Esophagus muscularis mucosa (tissue), 4 donors: ENCODE measurements at regions of chr16 and their contacts with region 1.

Region 1: GRCh38 chr16:96935-97381 is 18.9 kb downstream of the MPG start:
- DNase-seq: peak; percentile 98
- H3K4me3 ChIP-seq: no peak overlapping the region
- H3K27ac ChIP-seq: no peak overlapping the region
- H3K4me1 ChIP-seq: peaks cover 19 to 37% (median 25%) of the 10 kb centered on the region in 4 donors
- H3K27me3 ChIP-seq: no peaks in the 10 kb centered on the region
- CTCF ChIP-seq: peak; percentile 98 to 100 (median 99)
- EP300 ChIP-seq: no peak
- POLR2A ChIP-seq: no peak

Region 2: GRCh38 chr16:65671-66137 is 31.3 kb before region 1 on chr16:
- intact Hi-C with region 1: loop called (anchors 1 kb)
- DNase-seq: peak; percentile 96
- H3K4me3 ChIP-seq: no peak overlapping the region
- H3K27ac ChIP-seq: no peak overlapping the region
- H3K4me1 ChIP-seq: peaks cover 51 to 60% (median 55%) of the 10 kb centered on the region in 4 donors
- H3K27me3 ChIP-seq: no peaks in the 10 kb centered on the region
- CTCF ChIP-seq: peak in 2 of 3 experiments; percentile 93 to 94
- EP300 ChIP-seq: no peak
- POLR2A ChIP-seq: no peak

Region 3: GRCh38 chr16:164827-165538 is 68.0 kb after region 1 on chr16:
- intact Hi-C with region 1: no loop called
- DNase-seq: no peak
- H3K4me3 ChIP-seq: peak overlapping the region in 3 of 4 donors; percentile 17 to 30 (median 25)
- H3K27ac ChIP-seq: no peak overlapping the region
- H3K4me1 ChIP-seq: peaks cover 19 to 21% (median 20%) of the 10 kb centered on the region in 4 donors
- H3K27me3 ChIP-seq: peaks cover 10 to 87% (median 43%) of the 10 kb centered on the region in 4 donors
- CTCF ChIP-seq: no peak
- EP300 ChIP-seq: no peak
- POLR2A ChIP-seq: no peak

Region 4: GRCh38 chr16:200388-200787 is 103.4 kb after region 1 on chr16:
- intact Hi-C with region 1: no loop called
- DNase-seq: no peak
- H3K4me3 ChIP-seq: no peak overlapping the region
- H3K27ac ChIP-seq: no peak overlapping the region
- H3K4me1 ChIP-seq: no peaks in the 10 kb centered on the region
- H3K27me3 ChIP-seq: no peaks in the 10 kb centered on the region
- CTCF ChIP-seq: no peak
- EP300 ChIP-seq: no peak
- POLR2A ChIP-seq: no peak

Region 5: DNA sequence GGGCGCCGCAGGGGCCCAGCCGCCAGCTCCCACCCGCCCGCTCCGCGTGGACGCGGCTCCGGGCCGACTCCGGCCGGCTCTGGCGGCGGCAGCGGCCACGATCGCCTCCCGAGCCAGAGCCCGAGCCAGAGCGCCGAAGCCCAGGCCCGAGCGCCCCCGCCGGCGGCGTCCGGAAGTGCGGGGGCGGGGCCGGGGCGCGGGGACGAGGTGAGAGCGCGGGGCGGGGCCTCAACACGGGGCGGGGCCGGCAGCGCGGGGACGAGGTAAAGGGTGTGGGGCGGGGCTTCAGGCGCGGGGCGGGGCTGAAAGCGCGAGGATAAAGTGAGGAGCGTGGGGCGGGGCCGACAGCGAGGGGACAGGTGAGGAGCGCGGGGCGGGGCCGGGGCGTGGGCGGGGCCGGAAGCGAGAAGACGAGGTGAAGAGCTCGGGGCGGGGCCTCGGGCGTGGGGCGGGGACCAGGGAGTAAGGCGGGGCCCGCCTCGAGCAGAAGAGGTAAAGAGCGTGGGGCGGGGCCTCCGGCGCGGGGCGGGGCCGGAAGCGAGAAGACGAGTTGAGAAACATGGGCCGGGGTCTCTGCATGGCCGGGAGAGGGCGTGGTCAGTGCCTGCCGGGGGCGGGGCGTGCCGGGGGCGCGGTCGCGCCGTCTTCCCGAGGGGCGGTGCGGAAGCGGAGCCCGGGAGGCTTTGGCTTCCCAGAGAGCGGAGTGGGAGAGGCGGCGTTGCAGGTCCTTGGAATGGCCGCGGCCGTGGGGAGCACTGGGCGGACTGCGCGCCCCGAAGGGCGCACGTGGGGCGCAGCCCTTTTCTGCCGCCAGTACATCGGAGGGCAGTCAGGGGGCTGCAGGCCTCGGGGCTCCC is 255.8 kb after region 1 on chr16 and contains the start of gene AXIN1:
- intact Hi-C with region 1: no loop called
- DNase-seq: peak; percentile 100
- H3K4me3 ChIP-seq: peak within 1 kb of the TSS; percentile 78 to 94 (median 80)
- H3K27ac ChIP-seq: peak within 1 kb of the TSS; percentile 71 to 86 (median 81)
- H3K4me1 ChIP-seq: peaks cover 8 to 34% (median 27%) of the 10 kb centered on the region in 4 donors
- H3K27me3 ChIP-seq: no peaks in the 10 kb centered on the region
- CTCF ChIP-seq: peak; percentile 46 to 79 (median 63)
- EP300 ChIP-seq: no peak
- POLR2A ChIP-seq: no peak
- total RNA-seq, gene AXIN1: 24.1 to 56.2 (median 44.1) TPM

Region 6: GRCh38 chr16:381789-382717 is 285.1 kb after region 1 on chr16 and contains the start of gene PGAP6:
- intact Hi-C with region 1: no loop called
- DNase-seq: no peak
- H3K4me3 ChIP-seq: peak within 1 kb of the TSS; percentile 68 to 98 (median 94)
- H3K27ac ChIP-seq: peak within 1 kb of the TSS; percentile 81 to 91 (median 84)
- H3K4me1 ChIP-seq: peaks cover 27 to 58% (median 46%) of the 10 kb centered on the region in 4 donors
- H3K27me3 ChIP-seq: no peaks in the 10 kb centered on the region
- CTCF ChIP-seq: no peak
- EP300 ChIP-seq: no peak
- POLR2A ChIP-seq: no peak
- total RNA-seq, gene PGAP6: 32.8 to 53.5 (median 46.3) TPM